ENCODE measurements at regions of chr4 and their contacts with region 1.

Region 1: GRCh38 chr4:121736735-121737351 is 28.1 kb downstream of the SMIM43 start:
- DNase-seq: no peak
- H3K4me3 ChIP-seq: no peak overlapping the region
- H3K27ac ChIP-seq: no peak overlapping the region
- H3K4me1 ChIP-seq: peaks cover 0 to 6% (median 2%) of the 10 kb centered on the region in 4 donors
- H3K27me3 ChIP-seq: no peaks in the 10 kb centered on the region
- CTCF ChIP-seq: peak; percentile 39 to 59 (median 43)
- EP300 ChIP-seq: no peak
- POLR2A ChIP-seq: no peak

Region 2: DNA sequence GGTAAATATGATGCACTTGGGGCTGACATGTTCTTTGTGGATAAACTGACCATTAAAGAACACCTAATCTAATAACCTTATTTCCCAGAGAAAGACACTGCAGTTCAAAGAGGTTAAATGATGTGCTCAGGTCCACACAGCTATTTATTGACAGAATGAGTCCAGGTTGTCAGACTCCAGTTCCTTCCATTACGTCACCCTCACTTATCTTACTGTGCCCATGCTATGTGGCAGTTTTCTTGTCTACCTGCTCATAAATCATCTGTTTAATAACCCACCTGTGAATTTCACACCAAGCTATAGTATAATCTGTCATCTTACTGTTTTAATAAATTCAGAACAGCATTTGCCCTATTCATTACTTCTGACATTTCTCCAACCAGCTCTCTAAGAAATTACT is 392.7 kb before region 1 on chr4:
- intact Hi-C with region 1: no loop called
- DNase-seq: no peak
- H3K4me3 ChIP-seq: no peak overlapping the region
- H3K27ac ChIP-seq: no peak overlapping the region
- H3K4me1 ChIP-seq: no peaks in the 10 kb centered on the region
- H3K27me3 ChIP-seq: no peaks in the 10 kb centered on the region
- CTCF ChIP-seq: no peak
- EP300 ChIP-seq: no peak
- POLR2A ChIP-seq: no peak

Region 3: DNA sequence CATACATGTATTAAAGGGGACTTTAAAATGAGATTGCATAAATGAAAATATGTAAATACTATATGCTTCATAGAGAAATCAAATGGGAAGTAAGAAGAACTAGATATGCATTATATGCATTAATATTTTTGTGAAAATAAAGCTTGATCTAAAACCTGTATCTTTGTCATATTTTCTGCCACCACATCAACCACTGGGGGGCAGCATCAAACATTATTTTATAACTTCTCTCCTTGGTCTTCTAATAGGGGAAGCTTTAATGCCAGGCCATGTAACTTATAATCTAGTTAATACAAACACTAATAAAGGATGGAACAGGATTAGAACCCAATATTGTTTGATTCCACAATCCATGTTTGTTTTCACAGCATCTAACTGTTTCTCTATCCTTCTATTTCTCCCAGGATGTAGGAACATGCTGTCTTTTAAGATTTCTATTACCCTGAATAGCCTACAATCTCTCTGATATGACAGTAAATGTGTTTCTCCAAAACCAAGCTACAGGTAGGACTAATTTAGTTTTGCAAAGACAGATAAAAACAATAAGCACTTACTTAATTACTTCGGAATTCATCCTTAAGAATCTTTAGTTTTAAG is 366.0 kb before region 1 on chr4:
- intact Hi-C with region 1: loop called (anchors 5 kb)
- DNase-seq: no peak
- H3K4me3 ChIP-seq: no peak overlapping the region
- H3K27ac ChIP-seq: no peak overlapping the region
- H3K4me1 ChIP-seq: no peaks in the 10 kb centered on the region
- H3K27me3 ChIP-seq: no peaks in the 10 kb centered on the region
- CTCF ChIP-seq: peak; percentile 50 to 67 (median 60)
- EP300 ChIP-seq: no peak
- POLR2A ChIP-seq: no peak

Region 4: GRCh38 chr4:121484633-121485032 is 252.2 kb before region 1 on chr4:
- intact Hi-C with region 1: loop called (anchors 10 kb)
- DNase-seq: no peak
- H3K4me3 ChIP-seq: no peak overlapping the region
- H3K27ac ChIP-seq: no peak overlapping the region
- H3K4me1 ChIP-seq: no peaks in the 10 kb centered on the region
- H3K27me3 ChIP-seq: no peaks in the 10 kb centered on the region
- CTCF ChIP-seq: peak; percentile 39 to 70 (median 51)
- EP300 ChIP-seq: no peak
- POLR2A ChIP-seq: no peak

Region 5: DNA sequence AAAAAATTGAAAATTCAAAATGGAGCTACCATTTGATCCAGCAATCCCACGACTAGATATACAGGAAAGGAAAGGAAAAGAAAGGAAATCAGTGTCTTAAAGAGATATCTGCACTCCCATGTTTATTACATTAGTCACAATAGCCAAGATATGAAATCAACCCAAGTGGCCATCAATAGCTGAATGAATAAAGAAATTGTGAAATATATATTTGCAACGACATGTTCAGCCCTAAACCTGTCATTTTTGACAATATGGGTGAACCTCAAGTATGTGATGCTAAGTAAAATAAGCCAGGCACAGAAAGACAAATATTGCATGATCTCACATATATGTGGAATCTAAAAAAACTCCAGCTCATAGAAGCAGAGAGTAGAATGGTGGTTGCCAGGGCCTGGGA is 195.1 kb before region 1 on chr4:
- intact Hi-C with region 1: no loop called
- DNase-seq: no peak
- H3K4me3 ChIP-seq: no peak overlapping the region
- H3K27ac ChIP-seq: no peak overlapping the region
- H3K4me1 ChIP-seq: no peaks in the 10 kb centered on the region
- H3K27me3 ChIP-seq: no peaks in the 10 kb centered on the region
- CTCF ChIP-seq: no peak
- EP300 ChIP-seq: no peak
- POLR2A ChIP-seq: no peak